Calu3 (cell line): ENCODE measurements at regions of chr3 and their contacts with region 1.

Region 1: DNA sequence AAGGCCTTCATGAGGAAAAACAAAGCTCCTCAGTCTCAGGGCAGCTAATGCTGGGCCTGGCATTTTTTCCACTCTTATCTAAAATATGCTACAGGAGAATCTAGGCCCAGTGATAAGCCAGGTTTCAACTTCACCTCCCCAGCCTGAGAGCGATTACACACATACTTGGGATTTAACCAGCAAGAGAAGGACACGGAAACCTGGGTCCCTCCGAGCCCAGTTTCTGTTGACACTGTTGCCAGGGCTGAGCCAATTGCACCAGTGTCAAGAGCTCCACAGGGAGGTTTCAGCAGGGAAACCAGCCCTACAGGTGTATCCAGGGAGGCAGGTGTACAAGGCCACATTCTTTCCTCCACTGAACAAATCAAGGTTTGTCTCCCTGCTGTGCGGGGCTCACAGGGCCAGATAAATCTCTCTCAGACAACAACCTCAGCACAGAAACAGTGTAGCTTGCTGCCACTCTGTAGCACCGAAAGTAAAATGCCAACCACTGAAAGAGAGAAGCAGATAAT is 85.4 kb downstream of the MAGI1 start:
- DNase-seq: peak; percentile 92
- H3K4me3 Mint-ChIP-seq: peak overlapping the region; percentile 62
- H3K27ac Mint-ChIP-seq: peak overlapping the region; percentile 99
- H3K4me1 Mint-ChIP-seq: peaks cover 78% of the 10 kb centered on the region
- H3K27me3 Mint-ChIP-seq: no peaks in the 10 kb centered on the region
- CTCF ChIP-seq: no peak

Region 2: DNA sequence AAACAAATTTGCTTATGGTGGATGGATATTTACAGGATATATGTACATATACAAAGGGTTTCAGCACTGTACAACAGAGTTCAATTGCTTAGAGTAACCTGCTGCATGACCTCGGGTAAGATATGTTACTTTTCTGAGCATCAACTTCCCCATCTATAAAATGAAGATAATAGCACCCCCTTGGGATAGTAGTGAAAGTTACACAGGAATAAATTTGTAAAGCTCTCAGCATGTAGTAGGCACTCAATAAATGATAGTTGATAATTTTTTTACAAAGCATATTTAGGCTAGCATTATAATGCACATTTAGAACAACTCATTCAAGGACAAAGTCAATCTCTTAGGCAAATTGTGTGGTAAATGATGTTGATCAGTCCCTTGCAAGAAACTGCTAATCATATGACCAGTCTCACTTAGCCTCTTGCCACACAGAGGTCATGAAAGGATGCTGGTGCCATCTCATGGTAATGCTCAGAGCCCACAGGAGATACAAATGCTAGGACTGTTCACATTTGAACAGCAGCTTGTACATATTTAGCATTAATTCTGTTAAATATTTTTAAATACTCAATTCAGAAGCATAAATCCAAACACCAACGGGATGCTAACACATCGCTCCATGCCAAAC is 38.5 kb before region 1 on chr3:
- CTCF ChIA-PET with region 1: interaction called, 3 read pairs
- intact Hi-C with region 1: loop called (anchors 5 kb)
- DNase-seq: no peak
- H3K4me3 Mint-ChIP-seq: no peak overlapping the region
- H3K27ac Mint-ChIP-seq: peak overlapping the region; percentile 35
- H3K4me1 Mint-ChIP-seq: peaks cover 45% of the 10 kb centered on the region
- H3K27me3 Mint-ChIP-seq: no peaks in the 10 kb centered on the region
- CTCF ChIP-seq: peak; percentile 4

Region 3: GRCh38 chr3:65963787-65964677 is 10.7 kb after region 1 on chr3:
- CTCF ChIA-PET with region 1: interaction called, 11 read pairs
- intact Hi-C with region 1: no loop called
- DNase-seq: peak; percentile 41
- H3K4me3 Mint-ChIP-seq: no peak overlapping the region
- H3K27ac Mint-ChIP-seq: peak overlapping the region; percentile 82
- H3K4me1 Mint-ChIP-seq: peaks cover 69% of the 10 kb centered on the region
- H3K27me3 Mint-ChIP-seq: no peaks in the 10 kb centered on the region
- CTCF ChIP-seq: no peak

Region 4: DNA sequence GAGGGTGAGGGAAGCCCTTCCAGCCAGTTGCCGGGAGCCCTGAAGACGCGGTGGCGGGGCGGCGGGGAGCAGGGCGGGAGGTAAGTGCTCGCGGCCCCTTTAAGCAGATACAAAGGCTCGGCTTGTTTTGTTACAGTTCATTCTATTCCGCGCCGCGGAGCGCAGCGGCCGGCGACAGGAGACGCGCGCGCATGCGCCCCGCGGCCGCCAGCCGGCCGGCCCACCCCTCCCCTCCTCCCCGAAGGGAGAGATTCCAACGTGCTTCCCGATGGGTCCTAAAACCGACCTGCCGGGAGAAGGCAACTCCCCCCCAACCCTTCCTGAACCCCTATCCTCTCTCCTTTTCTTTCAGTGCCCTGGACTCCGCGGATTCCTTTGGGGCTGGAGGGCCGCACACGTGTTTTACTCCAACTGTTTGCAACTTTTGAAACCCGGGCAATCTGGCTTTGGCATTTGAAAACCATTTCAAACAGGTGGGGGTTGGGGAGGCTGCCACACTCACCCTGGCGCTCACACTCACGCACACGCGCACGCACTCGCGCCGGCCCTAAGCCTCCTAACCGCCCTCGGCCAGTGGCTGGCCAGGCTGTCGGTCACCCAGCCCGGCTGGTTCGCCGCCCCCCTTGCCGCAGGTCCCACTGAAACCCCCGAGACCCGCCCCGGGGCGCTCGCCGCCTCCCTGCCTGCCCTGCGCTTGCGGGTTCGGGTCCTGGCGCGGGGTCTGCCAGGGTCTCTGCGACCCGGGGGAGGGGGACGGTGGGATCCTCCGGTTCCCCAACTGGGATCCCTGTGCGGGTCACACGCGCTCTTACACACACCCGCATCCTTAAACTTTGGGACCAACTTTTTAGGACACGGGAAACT is 85.6 kb after region 1 on chr3 and contains the start of gene MAGI1:
- CTCF ChIA-PET with region 1: interaction called, 12 read pairs
- intact Hi-C with region 1: loop called (anchors 2 kb)
- DNase-seq: peak; percentile 94
- H3K4me3 Mint-ChIP-seq: peak within 1 kb of the TSS; percentile 72
- H3K27ac Mint-ChIP-seq: peak within 1 kb of the TSS; percentile 42
- H3K4me1 Mint-ChIP-seq: peaks cover 28% of the 10 kb centered on the region
- H3K27me3 Mint-ChIP-seq: no peaks in the 10 kb centered on the region
- CTCF ChIP-seq: no peak
- total RNA-seq, gene MAGI1: 75.1 and 76.4 TPM in 2 replicates

Region 5: DNA sequence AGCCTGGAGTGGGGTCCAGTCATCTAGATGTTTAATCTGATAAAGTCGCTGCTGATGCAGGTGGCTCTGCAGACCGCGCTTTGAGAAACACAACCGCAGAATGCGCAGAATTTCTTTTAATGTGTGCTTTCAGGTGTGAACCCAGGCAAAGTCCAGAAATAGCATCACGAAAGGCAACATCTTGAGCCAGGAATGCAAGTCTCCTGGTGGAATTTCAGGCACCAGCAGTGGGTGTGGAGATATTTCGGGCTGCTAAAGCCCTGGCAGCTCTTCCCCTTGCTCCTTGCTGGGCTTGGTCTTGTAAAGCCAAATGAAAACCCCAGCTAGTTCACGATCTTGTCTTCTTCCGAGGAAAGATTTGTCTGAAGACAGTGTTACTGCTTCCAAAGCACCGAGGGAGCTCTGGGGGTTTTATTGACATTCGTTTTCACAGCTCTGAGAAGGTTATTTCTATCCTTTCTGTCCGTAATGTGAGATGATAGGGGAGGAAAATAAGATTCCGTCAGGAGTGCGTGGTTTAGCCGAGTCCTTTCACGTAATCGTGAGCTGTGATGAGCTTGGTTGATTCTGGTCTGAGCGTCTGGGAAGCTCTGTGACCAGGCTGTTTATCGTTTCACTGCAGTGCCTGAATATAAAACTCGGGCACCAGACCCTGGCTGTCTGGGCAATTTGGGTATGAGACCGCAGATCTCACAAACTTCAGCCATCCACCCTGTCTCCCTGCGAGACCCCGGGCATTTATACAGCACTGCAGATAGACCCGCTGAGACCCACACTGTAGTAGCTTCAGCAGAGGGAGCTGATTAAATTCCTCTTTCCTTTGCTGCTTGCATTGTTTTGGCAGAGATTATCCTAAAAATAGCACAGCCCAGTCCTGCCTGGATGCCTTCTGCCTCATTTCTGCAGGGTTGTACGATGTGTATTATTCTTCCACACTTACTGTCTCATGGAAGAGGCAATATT is 200.4 kb after region 1 on chr3:
- CTCF ChIA-PET with region 1: no interaction called
- intact Hi-C with region 1: no loop called
- DNase-seq: no peak
- H3K4me3 Mint-ChIP-seq: no peak overlapping the region
- H3K27ac Mint-ChIP-seq: no peak overlapping the region
- H3K4me1 Mint-ChIP-seq: no peaks in the 10 kb centered on the region
- H3K27me3 Mint-ChIP-seq: no peaks in the 10 kb centered on the region
- CTCF ChIP-seq: no peak

Region 6: GRCh38 chr3:66195347-66195783 is 242.0 kb after region 1 on chr3:
- CTCF ChIA-PET with region 1: interaction called, 3 read pairs
- intact Hi-C with region 1: loop called (anchors 5 kb)
- DNase-seq: peak; percentile 77
- H3K4me3 Mint-ChIP-seq: peak overlapping the region; percentile 66
- H3K27ac Mint-ChIP-seq: no peak overlapping the region
- H3K4me1 Mint-ChIP-seq: no peaks in the 10 kb centered on the region
- H3K27me3 Mint-ChIP-seq: no peaks in the 10 kb centered on the region
- CTCF ChIP-seq: no peak